ENCODE measurements at regions of chr7 and their contacts with region 1.

Region 1: DNA sequence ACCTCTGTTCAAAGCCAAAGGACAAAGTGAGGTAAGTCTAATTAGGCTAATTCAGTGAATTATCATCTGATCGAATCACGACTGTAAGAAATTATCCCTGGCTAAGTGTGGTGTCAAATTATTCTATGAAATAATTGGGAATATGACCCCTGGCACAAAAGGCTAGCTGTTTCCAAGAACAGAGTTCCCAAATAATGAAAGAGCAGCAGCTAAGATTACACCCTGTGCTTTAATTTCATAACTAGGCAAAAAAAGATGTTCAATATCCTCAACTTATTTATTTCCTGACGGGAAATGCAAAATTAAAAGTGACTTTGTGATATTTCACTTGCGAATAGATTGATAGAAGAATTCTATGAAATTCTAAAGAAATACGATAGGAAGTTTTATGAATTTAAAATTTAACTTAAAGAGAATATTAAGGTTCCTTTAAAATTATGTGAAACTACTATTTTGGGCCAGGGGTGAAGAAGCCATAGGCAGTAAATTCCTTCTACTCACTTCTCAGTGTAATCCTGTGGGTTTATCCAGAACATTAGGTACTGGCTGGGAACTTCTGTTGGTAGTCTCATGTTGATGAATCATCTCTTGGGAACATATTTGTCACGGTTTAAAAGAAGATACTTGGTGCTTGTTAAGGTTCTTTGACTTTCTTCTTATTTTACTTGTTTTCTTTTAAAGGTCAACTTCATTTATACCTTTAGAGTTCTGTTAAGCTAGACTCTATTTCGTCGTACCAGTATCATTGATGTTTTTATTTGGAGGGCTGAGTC is 148.5 kb downstream of the POLR1F start:
- DNase-seq: peak in 1 of 2 donors; percentile 9
- ATAC-seq: peak; percentile 97
- H3K4me3 ChIP-seq: peak overlapping the region in 2 of 4 donors; percentile 9 to 11
- H3K27ac ChIP-seq: peak overlapping the region; percentile 69 to 85 (median 84)
- H3K4me1 ChIP-seq: peaks cover 6 to 18% of the 10 kb centered on the region in 2 donors
- H3K27me3 ChIP-seq: no peaks in the 10 kb centered on the region
- CTCF ChIP-seq: no peak
- POLR2A ChIP-seq: no peak

Region 2: GRCh38 chr7:18508443-18509427 is 1051.6 kb before region 1 on chr7:
- in situ Hi-C with region 1: no loop called
- intact Hi-C with region 1: loop called (anchors 10 kb)
- DNase-seq: peak; percentile 12 to 42
- ATAC-seq: peak; percentile 78 to 85
- H3K4me3 ChIP-seq: peak overlapping the region; percentile 7 to 48 (median 40)
- H3K27ac ChIP-seq: peak overlapping the region; percentile 83 to 91 (median 90)
- H3K4me1 ChIP-seq: peaks cover 49 to 51% of the 10 kb centered on the region in 2 donors
- H3K27me3 ChIP-seq: no peaks in the 10 kb centered on the region
- CTCF ChIP-seq: no peak
- POLR2A ChIP-seq: peak; percentile 42 to 47

Region 3: DNA sequence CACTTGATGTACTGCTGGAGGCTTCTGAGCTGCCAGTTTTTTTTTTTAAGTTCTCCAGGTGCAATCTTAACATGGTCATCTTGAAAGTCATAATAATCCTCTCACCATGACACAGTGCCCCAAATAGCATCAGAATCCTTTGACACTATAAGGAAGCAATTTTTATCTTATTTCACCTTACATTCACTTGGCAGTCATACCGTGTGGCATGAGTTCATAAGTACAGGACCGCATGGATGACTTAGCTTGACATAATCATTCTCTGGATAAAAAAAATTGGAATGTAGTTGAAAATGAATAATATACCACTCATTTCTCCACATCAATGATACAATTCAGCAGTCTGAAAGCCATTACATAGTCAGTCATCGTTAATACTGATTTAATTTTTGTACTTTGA is 238.7 kb after region 1 on chr7:
- in situ Hi-C with region 1: no loop called
- intact Hi-C with region 1: no loop called
- DNase-seq: no peak
- ATAC-seq: no peak
- H3K4me3 ChIP-seq: no peak overlapping the region
- H3K27ac ChIP-seq: no peak overlapping the region
- H3K4me1 ChIP-seq: no peaks in the 10 kb centered on the region
- H3K27me3 ChIP-seq: no peaks in the 10 kb centered on the region
- CTCF ChIP-seq: no peak
- POLR2A ChIP-seq: no peak